Activated CD4-positive, alpha-beta T cell treated with anti-CD3 and anti-CD28 coated beads, Interleukin-2, amount 10 ng/mL, durations not matched to agents 24 days and 14 days (primary cell): ENCODE measurements at regions of chr12 and their contacts with region 1.

Region 1: GRCh38 chr12:15882118-15882971 is at the start of gene STRAP:
- DNase-seq: peak; percentile 99
- H3K4me3 Mint-ChIP-seq: peak within 1 kb of the TSS; percentile 97
- H3K27ac Mint-ChIP-seq: peak within 1 kb of the TSS; percentile 94
- H3K4me1 Mint-ChIP-seq: peaks cover 39% of the 10 kb centered on the region
- H3K27me3 Mint-ChIP-seq: peaks cover 3% of the 10 kb centered on the region
- total RNA-seq, gene STRAP: 162 and 166 TPM in 2 replicates

Region 2: GRCh38 chr12:14803011-14803829 is 1079.1 kb before region 1 on chr12 and contains the starts of genes C12orf60 and WBP11:
- intact Hi-C with region 1: loop called (anchors 5 kb)
- DNase-seq: peak; percentile 96
- H3K4me3 Mint-ChIP-seq: no peak within 1 kb of the TSS
- H3K27ac Mint-ChIP-seq: no peak within 1 kb of the TSS
- H3K4me1 Mint-ChIP-seq: peaks cover 22% of the 10 kb centered on the region
- H3K27me3 Mint-ChIP-seq: no peaks in the 10 kb centered on the region
- total RNA-seq, gene C12orf60: 2.2 and 3.0 TPM in 2 replicates
- total RNA-seq, gene WBP11: 136 and 138 TPM in 2 replicates

Region 3: GRCh38 chr12:14948672-14949071 is 933.7 kb before region 1 on chr12:
- intact Hi-C with region 1: loop called (anchors 10 kb)
- DNase-seq: peak; percentile 89
- H3K4me3 Mint-ChIP-seq: peak overlapping the region; percentile 79
- H3K27ac Mint-ChIP-seq: peak overlapping the region; percentile 95
- H3K4me1 Mint-ChIP-seq: peaks cover 74% of the 10 kb centered on the region
- H3K27me3 Mint-ChIP-seq: no peaks in the 10 kb centered on the region

Region 4: DNA sequence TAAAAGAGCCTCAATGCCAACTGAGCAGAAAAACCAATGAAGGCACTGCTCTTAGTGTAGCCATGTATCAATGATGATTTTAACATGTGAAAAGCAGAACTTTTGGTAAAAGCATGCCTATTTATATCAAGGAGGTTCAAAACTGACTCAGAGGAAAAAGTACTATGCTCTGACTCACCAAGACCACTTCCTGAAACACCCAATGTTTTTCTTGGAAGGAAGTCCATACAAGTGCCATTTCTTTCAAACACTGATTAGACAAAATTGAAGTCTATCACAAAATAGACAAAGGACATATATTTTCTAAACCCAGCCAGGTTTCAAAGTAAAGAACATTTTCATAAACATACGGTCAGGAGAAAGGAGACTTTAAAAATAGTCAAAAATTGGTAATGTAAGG is 181.8 kb before region 1 on chr12:
- intact Hi-C with region 1: loop called (anchors 2 kb)
- DNase-seq: peak; percentile 74
- H3K4me3 Mint-ChIP-seq: peak overlapping the region; percentile 77
- H3K27ac Mint-ChIP-seq: peak overlapping the region; percentile 95
- H3K4me1 Mint-ChIP-seq: peaks cover 33% of the 10 kb centered on the region
- H3K27me3 Mint-ChIP-seq: no peaks in the 10 kb centered on the region

Region 5: DNA sequence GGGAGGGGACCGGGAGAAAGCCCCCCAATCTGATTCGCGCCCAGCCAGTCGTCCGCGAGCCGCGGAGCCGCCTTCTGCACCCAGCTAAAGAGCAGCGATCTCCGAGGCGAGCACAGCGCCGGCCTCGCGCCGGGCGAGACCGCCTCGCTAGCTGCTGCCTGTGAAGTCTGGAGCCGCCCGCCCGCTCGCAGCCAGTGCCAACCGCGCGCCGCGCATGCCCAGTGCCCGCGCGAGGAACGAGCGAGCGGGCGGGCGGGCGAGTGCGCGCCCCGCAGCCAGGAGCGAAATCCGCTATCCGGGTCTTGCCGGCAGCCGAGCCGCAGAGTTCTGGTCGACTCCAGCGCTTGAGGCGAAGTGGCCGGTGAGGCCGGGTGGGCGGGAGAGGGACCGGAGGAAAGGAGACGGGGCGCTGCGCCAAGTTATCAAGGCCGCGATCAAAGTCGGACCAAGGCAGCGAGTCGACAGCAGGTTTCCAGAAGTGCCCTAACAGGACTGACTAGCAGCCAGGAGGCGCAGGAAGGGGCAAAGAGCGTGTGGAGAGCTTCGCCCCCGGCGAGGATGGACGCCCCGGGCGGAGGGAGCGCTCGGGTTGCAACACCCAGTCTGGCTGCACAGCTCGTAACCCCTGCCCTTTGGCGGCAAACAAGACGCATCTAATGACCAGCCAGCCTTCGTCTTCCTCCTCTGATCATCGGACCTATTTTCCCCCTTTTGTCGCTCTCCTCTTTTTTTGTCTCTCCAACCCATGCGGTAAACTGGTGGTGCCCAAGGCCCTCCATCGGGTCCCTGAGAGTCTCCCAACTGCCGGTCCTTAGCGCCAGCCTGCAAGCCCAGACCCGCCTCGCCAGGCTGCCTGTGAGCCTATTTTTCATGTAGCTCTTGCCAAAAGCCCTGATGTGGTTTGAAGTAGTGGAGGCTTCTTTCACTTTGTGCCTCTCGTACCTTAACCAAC is 92.8 kb before region 1 on chr12 and contains the start of gene EPS8:
- intact Hi-C with region 1: loop called (anchors 2 kb)
- DNase-seq: peak; percentile 96
- H3K4me3 Mint-ChIP-seq: peak within 1 kb of the TSS; percentile 87
- H3K27ac Mint-ChIP-seq: peak within 1 kb of the TSS; percentile 74
- H3K4me1 Mint-ChIP-seq: peaks cover 12% of the 10 kb centered on the region
- H3K27me3 Mint-ChIP-seq: peaks cover 69% of the 10 kb centered on the region
- total RNA-seq, gene EPS8: 2.2 and 2.4 TPM in 2 replicates

Region 6: GRCh38 chr12:15899282-15899870 is 17.0 kb after region 1 on chr12:
- intact Hi-C with region 1: loop called (anchors 1 kb)
- DNase-seq: no peak
- H3K4me3 Mint-ChIP-seq: no peak overlapping the region
- H3K27ac Mint-ChIP-seq: no peak overlapping the region
- H3K4me1 Mint-ChIP-seq: peaks cover 8% of the 10 kb centered on the region
- H3K27me3 Mint-ChIP-seq: no peaks in the 10 kb centered on the region

Region 7: GRCh38 chr12:15910864-15911721 is 28.7 kb after region 1 on chr12 and contains the start of gene DERA:
- intact Hi-C with region 1: loop called (anchors 1 kb)
- DNase-seq: peak; percentile 90
- H3K4me3 Mint-ChIP-seq: peak within 1 kb of the TSS; percentile 84
- H3K27ac Mint-ChIP-seq: peak within 1 kb of the TSS; percentile 77
- H3K4me1 Mint-ChIP-seq: peaks cover 10% of the 10 kb centered on the region
- H3K27me3 Mint-ChIP-seq: no peaks in the 10 kb centered on the region
- total RNA-seq, gene DERA: 15.9 and 17.3 TPM in 2 replicates

Region 8: DNA sequence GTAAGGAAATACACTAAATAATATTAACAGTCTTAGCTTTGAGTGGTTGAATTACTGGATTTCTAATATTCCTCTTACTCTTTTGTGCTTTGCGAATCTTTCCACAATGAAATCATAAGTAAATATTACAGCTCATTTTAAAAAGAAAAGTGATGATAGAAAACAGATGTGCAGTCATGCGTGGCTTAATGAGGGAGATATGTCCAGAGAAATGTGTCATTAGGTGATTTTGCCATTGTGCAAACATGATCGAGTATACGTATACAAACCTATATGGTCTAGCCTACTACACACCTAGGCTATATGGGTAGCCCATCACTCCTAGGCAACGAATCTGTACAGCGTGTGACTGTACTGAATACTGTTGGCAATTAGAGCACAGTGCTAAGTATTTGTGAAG is 335.9 kb after region 1 on chr12:
- intact Hi-C with region 1: no loop called
- DNase-seq: no peak
- H3K4me3 Mint-ChIP-seq: no peak overlapping the region
- H3K27ac Mint-ChIP-seq: no peak overlapping the region
- H3K4me1 Mint-ChIP-seq: no peaks in the 10 kb centered on the region
- H3K27me3 Mint-ChIP-seq: no peaks in the 10 kb centered on the region

Region 9: DNA sequence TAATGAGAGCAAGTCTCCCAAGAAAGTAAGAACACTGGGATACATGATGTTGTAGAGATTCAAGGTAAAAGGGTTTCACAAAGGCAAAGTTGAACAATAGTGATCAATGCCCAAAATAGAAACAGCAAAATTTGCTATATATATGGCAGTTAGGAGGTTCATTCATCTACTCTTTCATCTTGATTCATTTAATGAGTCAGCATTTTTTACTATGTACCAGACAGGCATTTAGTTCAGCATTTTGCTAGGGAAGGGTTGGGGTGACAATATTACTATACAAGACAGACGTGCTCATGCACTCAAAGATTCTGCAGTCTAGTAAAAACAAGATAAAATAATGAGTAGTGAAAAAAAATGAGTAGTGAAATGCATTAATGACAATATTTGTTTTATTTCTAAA is 988.5 kb after region 1 on chr12:
- intact Hi-C with region 1: no loop called
- DNase-seq: no peak
- H3K4me3 Mint-ChIP-seq: no peak overlapping the region
- H3K27ac Mint-ChIP-seq: no peak overlapping the region
- H3K4me1 Mint-ChIP-seq: no peaks in the 10 kb centered on the region
- H3K27me3 Mint-ChIP-seq: no peaks in the 10 kb centered on the region